Sigmoid colon (tissue), 7 donors: ENCODE measurements at regions of chr2 and their contacts with region 1.

Region 1: GRCh38 chr2:234135720-234136221 is 85.3 kb downstream of the SPP2 start:
- DNase-seq: peak; percentile 65
- H3K4me3 ChIP-seq: no peak overlapping the region
- H3K27ac ChIP-seq: no peak overlapping the region
- H3K4me1 ChIP-seq: no peaks in the 10 kb centered on the region
- H3K27me3 ChIP-seq: peaks cover 0 to 11% (median 0%) of the 10 kb centered on the region in 3 donors
- CTCF ChIP-seq: peak; percentile 22 to 67 (median 46)
- EP300 ChIP-seq: no peak
- POLR2A ChIP-seq: no peak

Region 2: DNA sequence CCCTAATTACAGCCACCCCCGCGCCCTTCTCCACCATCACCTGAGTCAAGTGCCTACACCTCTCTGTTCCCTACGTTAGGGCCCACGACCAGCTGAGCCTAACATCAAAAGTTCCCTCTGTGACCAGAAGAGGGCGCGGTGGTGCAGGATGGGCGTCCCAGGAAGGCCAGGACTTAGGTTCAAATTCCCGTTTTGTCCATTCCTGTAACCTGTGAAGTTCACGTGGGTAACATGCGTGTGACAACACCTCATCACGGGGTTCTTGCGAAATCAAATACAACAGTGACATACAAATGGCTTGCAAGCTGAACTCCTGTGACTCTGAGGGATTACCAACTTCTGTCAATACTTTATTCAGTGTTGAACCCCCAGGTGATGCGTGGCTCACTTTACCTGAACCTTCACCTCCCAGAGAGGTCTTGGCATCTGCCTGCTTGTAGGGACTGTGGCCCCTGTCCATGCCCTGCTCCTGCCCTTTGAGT is 153.2 kb after region 1 on chr2:
- intact Hi-C with region 1: loop called (anchors 10 kb)
- DNase-seq: peak; percentile 80
- H3K4me3 ChIP-seq: no peak overlapping the region
- H3K27ac ChIP-seq: no peak overlapping the region
- H3K4me1 ChIP-seq: no peaks in the 10 kb centered on the region
- H3K27me3 ChIP-seq: no peaks in the 10 kb centered on the region
- CTCF ChIP-seq: peak; percentile 50 to 68 (median 62)
- EP300 ChIP-seq: no peak
- POLR2A ChIP-seq: no peak

Region 3: DNA sequence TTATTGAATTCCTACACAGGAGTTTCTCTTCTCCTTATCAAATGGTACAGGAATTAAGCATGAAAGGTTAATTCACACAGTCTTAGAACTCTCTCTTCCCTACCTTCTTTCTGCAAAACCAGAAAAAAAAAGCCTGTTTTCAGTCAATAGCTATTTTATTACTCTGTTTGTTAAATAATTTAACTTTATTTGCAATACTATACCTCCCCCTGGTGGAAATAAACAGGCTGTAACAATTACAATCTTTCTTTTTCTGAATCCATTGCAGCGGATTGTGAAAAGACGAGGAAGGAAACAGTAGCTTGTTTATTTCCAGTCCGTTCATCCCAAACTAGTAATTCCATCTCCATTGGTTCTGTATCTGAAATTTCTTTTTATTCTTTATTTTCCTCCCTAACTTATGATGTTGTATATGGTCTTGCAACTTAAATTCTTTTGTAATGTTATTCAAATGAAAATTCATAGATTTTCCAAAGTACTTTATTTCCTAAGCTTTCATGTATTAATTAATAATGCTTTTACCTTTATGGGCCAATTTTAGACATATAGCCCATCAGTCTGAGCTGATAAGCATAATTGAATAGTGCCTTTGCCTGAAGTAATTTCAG is 981.2 kb after region 1 on chr2:
- intact Hi-C with region 1: loop called (anchors 5 kb)
- DNase-seq: no peak
- H3K4me3 ChIP-seq: no peak overlapping the region
- H3K27ac ChIP-seq: no peak overlapping the region
- H3K4me1 ChIP-seq: no peaks in the 10 kb centered on the region
- H3K27me3 ChIP-seq: peaks cover 0 to 4% (median 0%) of the 10 kb centered on the region in 3 donors
- CTCF ChIP-seq: peak; percentile 40 to 65 (median 58)
- EP300 ChIP-seq: no peak
- POLR2A ChIP-seq: no peak